ENCODE measurements at regions of chr12 and their contacts with region 1.

Region 1: DNA sequence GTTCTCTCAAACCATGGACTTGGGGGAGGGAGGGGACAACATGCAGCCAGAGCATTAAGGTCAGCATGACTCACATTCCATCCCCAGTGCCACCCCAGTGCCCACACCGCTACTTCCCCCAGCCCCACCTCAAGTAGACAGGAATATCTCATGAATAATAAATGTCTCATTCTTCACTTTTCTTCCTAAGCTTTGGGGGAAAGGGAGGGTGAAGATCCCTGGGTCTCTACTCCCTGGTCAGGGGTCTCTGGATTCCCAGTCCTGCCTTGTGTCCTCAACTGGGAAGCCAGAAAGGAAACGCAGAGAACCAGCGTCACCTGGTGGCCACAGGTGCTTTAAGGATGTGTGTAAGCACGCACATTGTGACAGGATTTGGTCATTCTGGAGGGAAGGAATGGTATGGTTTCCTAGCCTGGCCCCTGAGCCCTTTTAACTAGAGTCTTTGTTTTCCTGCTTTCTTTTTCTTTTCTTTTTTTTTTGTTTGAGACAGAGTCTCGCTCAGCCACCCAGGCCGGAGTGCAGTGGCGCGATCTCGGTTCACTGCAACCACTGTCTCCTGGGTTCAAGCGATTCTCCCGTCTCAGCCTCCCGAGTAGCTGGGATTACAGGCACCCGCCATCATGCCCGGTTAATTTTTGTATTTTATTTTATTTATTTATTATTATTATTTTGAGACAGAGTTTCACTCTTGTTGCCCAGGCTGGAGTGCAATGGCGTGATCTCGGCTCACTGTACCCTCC is 3.4 kb downstream of the GPR84 start:
- DNase-seq: peak; percentile 81
- ATAC-seq: peak; percentile 68
- H3K4me3 ChIP-seq: no peak overlapping the region
- H3K27ac ChIP-seq: peak overlapping the region; percentile 91
- H3K4me1 ChIP-seq: peaks cover 32% of the 10 kb centered on the region
- H3K27me3 ChIP-seq: no peaks in the 10 kb centered on the region
- CTCF ChIP-seq: peak; percentile 96

Region 2: GRCh38 chr12:53892760-53893159 is 468.1 kb before region 1 on chr12:
- CTCF ChIA-PET with region 1: no interaction called
- POLR2A ChIA-PET with region 1: no interaction called
- in situ Hi-C with region 1: no loop called
- intact Hi-C with region 1: no loop called
- DNase-seq: no peak
- ATAC-seq: no peak
- H3K4me3 ChIP-seq: no peak overlapping the region
- H3K27ac ChIP-seq: no peak overlapping the region
- H3K4me1 ChIP-seq: no peaks in the 10 kb centered on the region
- H3K27me3 ChIP-seq: no peaks in the 10 kb centered on the region
- CTCF ChIP-seq: no peak

Region 3: DNA sequence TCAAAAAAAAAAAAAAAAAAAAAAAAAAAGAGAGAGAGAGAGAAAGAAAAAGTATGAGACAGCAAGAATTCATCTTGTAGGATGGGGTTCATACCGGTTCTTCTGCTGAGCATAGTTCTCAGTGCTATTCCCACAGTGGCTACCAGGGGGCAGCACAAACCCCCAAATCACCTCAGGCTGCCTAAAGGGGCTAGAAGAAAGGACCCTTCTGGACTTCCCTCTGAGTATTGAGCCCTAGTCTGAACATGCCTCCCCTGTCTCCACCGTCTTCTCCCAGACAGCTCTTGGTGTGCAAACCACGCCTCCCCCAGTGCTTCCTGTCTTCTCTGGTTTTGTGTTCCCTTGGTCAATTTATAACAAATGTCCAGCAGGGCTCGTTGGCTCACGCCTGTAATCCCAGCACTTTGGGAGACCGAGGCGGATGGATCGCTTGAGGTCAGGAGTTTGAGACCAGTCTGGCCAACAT is 140.8 kb before region 1 on chr12:
- CTCF ChIA-PET with region 1: interaction called, 8 read pairs
- POLR2A ChIA-PET with region 1: no interaction called
- in situ Hi-C with region 1: no loop called
- intact Hi-C with region 1: loop called (anchors 2 kb)
- DNase-seq: peak; percentile 75
- ATAC-seq: peak; percentile 58
- H3K4me3 ChIP-seq: peak overlapping the region; percentile 33 to 47
- H3K27ac ChIP-seq: peak overlapping the region; percentile 67
- H3K4me1 ChIP-seq: peaks cover 12% of the 10 kb centered on the region
- H3K27me3 ChIP-seq: no peaks in the 10 kb centered on the region
- CTCF ChIP-seq: peak; percentile 92

Region 4: GRCh38 chr12:54285150-54286041 is 75.5 kb before region 1 on chr12:
- CTCF ChIA-PET with region 1: no interaction called
- POLR2A ChIA-PET with region 1: no interaction called
- in situ Hi-C with region 1: no loop called
- intact Hi-C with region 1: loop called (anchors 5 kb)
- DNase-seq: no peak
- ATAC-seq: no peak
- H3K4me3 ChIP-seq: peak overlapping the region; percentile 26 to 99
- H3K27ac ChIP-seq: peak overlapping the region; percentile 44
- H3K4me1 ChIP-seq: peaks cover 40% of the 10 kb centered on the region
- H3K27me3 ChIP-seq: no peaks in the 10 kb centered on the region
- CTCF ChIP-seq: no peak; the same call in 1 of the 2 replicates

Region 5: GRCh38 chr12:54526812-54527630 is 166.1 kb after region 1 on chr12:
- CTCF ChIA-PET with region 1: no interaction called
- POLR2A ChIA-PET with region 1: no interaction called
- in situ Hi-C with region 1: no loop called
- intact Hi-C with region 1: no loop called
- DNase-seq: peak; percentile 15
- ATAC-seq: peak; percentile 74
- H3K4me3 ChIP-seq: no peak overlapping the region
- H3K27ac ChIP-seq: no peak overlapping the region
- H3K4me1 ChIP-seq: no peaks in the 10 kb centered on the region
- H3K27me3 ChIP-seq: peaks cover 39% of the 10 kb centered on the region
- CTCF ChIP-seq: peak; percentile 86